A549 (cell line): ENCODE measurements at regions of chr3 and their contacts with region 1.

Region 1: GRCh38 chr3:129249276-129250065 is at the start of gene COPG1:
- DNase-seq: peak; percentile 83 to 90
- ATAC-seq: peak; percentile 88 to 93
- H3K4me3 ChIP-seq: peak within 1 kb of the TSS; percentile 85
- H3K27ac ChIP-seq: peak within 1 kb of the TSS; percentile 95 to 98
- H3K4me1 ChIP-seq: peaks cover 21% of the 10 kb centered on the region; the same call in 2 of the 3 replicates
- CTCF ChIP-seq: no peak
- EP300 ChIP-seq: no peak
- POLR2A ChIP-seq: peak; percentile 84
- RAD21 ChIP-seq: no peak
- polyA plus RNA-seq, gene COPG1: 86.5 and 90.2 TPM in 2 replicates

Region 2: DNA sequence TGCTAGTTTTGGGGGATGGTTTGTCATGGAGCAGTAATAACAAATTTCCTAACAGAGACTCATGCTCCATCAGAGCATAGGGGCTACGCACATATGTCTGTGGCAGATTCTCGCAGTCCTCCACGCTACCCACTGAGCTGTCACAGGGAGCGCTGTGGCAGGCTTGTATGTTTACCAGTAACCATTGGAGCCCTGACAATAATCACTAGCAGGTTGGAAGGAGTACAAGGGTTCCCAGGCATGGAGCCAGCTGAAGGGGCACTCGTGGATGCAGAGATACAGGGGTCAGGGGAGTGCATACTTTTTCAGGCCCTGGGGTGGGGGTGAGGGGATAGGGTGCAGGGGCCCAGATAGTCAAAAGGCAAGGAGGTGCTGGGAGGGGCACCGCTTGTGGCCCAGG is 196.8 kb before region 1 on chr3:
- CTCF ChIA-PET with region 1: interaction called, 73 read pairs
- POLR2A ChIA-PET with region 1: interaction called, 9 read pairs
- DNase-seq: no peak
- ATAC-seq: no peak
- H3K4me3 ChIP-seq: no peak overlapping the region
- H3K27ac ChIP-seq: no peak overlapping the region
- H3K4me1 ChIP-seq: 0 out of 3 replicates have a peak, but pooled peaks cover 3% of the 10 kb centered on the region
- CTCF ChIP-seq: no peak
- EP300 ChIP-seq: no peak
- POLR2A ChIP-seq: no peak
- RAD21 ChIP-seq: no peak

Region 3: DNA sequence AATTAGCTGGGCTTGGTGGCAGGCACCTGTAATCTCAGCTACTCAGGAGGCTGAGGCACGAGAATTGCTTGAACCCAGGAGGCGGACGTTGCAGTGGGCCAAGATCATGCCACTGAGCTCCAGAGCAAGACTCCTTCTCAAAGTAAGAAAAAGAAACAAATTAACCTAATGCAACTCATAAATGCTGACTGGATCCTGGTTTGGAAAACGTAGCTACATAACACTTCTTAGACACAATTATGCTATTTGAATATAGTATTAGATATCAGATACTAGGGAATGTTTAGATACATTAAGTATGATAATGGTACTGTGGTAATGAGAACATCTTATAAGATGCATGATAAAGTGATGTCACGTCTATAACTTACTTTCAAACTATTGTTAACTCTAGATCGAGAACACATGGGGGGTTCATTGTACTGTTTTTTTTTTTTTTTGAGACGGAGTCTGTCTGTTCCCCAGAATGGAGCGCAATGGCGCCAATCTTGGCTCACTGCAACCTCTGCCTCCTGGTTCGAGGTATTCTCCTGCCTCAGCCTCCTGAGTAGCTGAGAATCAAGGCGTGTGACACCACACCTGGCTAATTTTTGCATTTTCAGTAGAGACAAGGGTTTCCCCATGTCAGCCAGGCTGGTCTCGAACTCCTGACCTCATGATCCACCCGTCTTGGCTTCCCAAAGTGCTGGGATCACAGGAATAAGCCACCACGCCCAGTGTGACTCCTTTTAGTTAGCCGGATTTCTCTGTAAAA is 82.7 kb before region 1 on chr3:
- CTCF ChIA-PET with region 1: interaction called, 83 read pairs
- POLR2A ChIA-PET with region 1: interaction called, 24 read pairs
- DNase-seq: no peak
- ATAC-seq: no peak
- H3K4me3 ChIP-seq: no peak overlapping the region
- H3K27ac ChIP-seq: no peak overlapping the region
- H3K4me1 ChIP-seq: peaks cover 9% of the 10 kb centered on the region; the same call in 2 of the 3 replicates
- CTCF ChIP-seq: no peak
- EP300 ChIP-seq: no peak
- POLR2A ChIP-seq: no peak
- RAD21 ChIP-seq: no peak

Region 4: GRCh38 chr3:129183569-129184395 is 65.7 kb before region 1 on chr3 and contains the start of gene CNBP:
- CTCF ChIA-PET with region 1: interaction called, 33 read pairs
- POLR2A ChIA-PET with region 1: interaction called, 11 read pairs
- DNase-seq: peak; percentile 86 to 94
- ATAC-seq: peak; percentile 99
- H3K4me3 ChIP-seq: peak within 1 kb of the TSS; percentile 98
- H3K27ac ChIP-seq: peak within 1 kb of the TSS; percentile 99 to 100
- H3K4me1 ChIP-seq: peaks cover 47% of the 10 kb centered on the region
- CTCF ChIP-seq: no peak
- EP300 ChIP-seq: no peak
- POLR2A ChIP-seq: peak; percentile 61
- RAD21 ChIP-seq: no peak
- polyA plus RNA-seq, gene CNBP: 309 and 365 TPM in 2 replicates

Region 5: DNA sequence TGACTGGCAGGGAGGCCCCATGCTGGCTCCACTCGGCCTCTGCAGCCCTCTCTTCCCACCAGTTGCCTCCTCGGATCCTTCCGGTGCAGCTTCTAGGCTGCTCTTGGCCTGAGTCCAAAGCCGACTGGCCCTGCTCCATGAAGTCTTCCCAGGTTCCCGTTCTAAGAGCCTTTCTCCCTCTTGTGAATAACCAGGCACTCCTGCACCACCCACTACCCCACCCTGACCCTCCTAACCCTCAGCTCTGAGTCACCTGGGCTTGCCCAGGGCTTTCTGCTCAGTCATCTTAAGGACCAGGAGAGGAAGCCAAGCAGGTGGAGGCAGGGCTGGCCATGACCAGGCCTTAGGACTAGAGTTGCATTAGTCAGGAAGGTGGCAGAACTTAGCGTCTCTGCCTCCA is 37.7 kb before region 1 on chr3:
- CTCF ChIA-PET with region 1: interaction called, 17 read pairs
- POLR2A ChIA-PET with region 1: no interaction called
- DNase-seq: peak; percentile 82 to 96
- ATAC-seq: peak; percentile 99 to 100
- H3K4me3 ChIP-seq: no peak overlapping the region
- H3K27ac ChIP-seq: peak overlapping the region; percentile 86 to 89
- H3K4me1 ChIP-seq: peaks cover 20% of the 10 kb centered on the region
- CTCF ChIP-seq: no peak
- EP300 ChIP-seq: no peak
- POLR2A ChIP-seq: no peak
- RAD21 ChIP-seq: peak in 1 of 2 experiments; percentile 40; a peak in 2 of 5 replicates

Region 6: GRCh38 chr3:129266651-129267050 is 17.2 kb after region 1 on chr3:
- CTCF ChIA-PET with region 1: interaction called, 11 read pairs
- POLR2A ChIA-PET with region 1: no interaction called
- DNase-seq: no peak
- ATAC-seq: no peak
- H3K4me3 ChIP-seq: no peak overlapping the region
- H3K27ac ChIP-seq: no peak overlapping the region
- H3K4me1 ChIP-seq: no peaks in the 10 kb centered on the region
- CTCF ChIP-seq: no peak
- EP300 ChIP-seq: no peak
- POLR2A ChIP-seq: no peak
- RAD21 ChIP-seq: no peak

Region 7: DNA sequence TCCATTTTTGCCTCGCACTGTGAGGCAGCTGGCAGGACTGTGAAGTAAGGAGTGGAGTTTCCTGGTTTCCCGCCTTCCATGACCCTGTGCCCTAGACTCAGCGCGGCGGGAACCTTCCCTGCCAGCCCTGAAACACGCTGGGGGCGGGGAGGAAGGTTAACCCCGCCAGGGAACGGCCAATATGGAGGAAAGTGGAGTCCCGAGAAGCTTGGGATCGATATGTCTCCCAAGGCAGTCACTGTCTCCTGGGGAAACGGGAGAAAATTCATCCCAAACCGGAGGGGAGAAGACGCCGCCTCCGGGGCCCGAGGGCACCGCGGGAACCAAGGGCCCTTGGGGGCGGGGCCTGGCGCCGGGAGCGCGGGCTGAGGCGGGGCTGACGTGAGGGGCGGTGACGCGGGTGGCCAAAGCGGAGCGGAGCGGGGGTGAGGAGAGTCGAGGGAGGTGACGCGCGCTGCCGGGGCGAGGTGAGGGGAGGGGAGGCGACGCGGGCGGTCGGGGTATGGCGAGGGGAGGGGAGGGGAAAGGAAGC is 29.0 kb after region 1 on chr3 and contains the start of gene HMCES:
- CTCF ChIA-PET with region 1: no interaction called
- POLR2A ChIA-PET with region 1: no interaction called
- DNase-seq: peak; percentile 77 to 82
- ATAC-seq: peak; percentile 90 to 93
- H3K4me3 ChIP-seq: peak within 1 kb of the TSS; percentile 70
- H3K27ac ChIP-seq: peak within 1 kb of the TSS; percentile 85 to 100
- H3K4me1 ChIP-seq: peaks cover 22% of the 10 kb centered on the region
- CTCF ChIP-seq: no peak
- EP300 ChIP-seq: no peak
- POLR2A ChIP-seq: no peak
- RAD21 ChIP-seq: no peak
- polyA plus RNA-seq, gene HMCES: 35.2 and 38.3 TPM in 2 replicates

Region 8: GRCh38 chr3:129723558-129724324 is 474.3 kb after region 1 on chr3:
- CTCF ChIA-PET with region 1: no interaction called
- POLR2A ChIA-PET with region 1: no interaction called
- DNase-seq: peak in 1 of 2 experiments; percentile 69
- ATAC-seq: peak; percentile 88 to 94
- H3K4me3 ChIP-seq: peak overlapping the region; percentile 35
- H3K27ac ChIP-seq: peak overlapping the region; percentile 84 to 87
- H3K4me1 ChIP-seq: peaks cover 55% of the 10 kb centered on the region
- CTCF ChIP-seq: 0 out of 3 replicates have a peak, but pooled peaks have one; percentile 7
- EP300 ChIP-seq: no peak
- POLR2A ChIP-seq: no peak
- RAD21 ChIP-seq: no peak